ENCODE measurements at regions of chr19 and their contacts with region 1.

Region 1: GRCh38 chr19:12294249-12295158 is at the start of gene ZNF44:
- DNase-seq: peak; percentile 95
- H3K4me3 Mint-ChIP-seq: peak within 1 kb of the TSS; percentile 100
- H3K27ac Mint-ChIP-seq: peak within 1 kb of the TSS; percentile 99
- H3K4me1 Mint-ChIP-seq: peaks cover 34% of the 10 kb centered on the region
- H3K27me3 Mint-ChIP-seq: no peaks in the 10 kb centered on the region
- total RNA-seq, gene ZNF44: 7.4 and 10.3 TPM in 2 replicates

Region 2: GRCh38 chr19:12092065-12092867 is 202.2 kb before region 1 on chr19:
- intact Hi-C with region 1: loop called (anchors 5 kb)
- DNase-seq: peak; percentile 41
- H3K4me3 Mint-ChIP-seq: peak overlapping the region; percentile 81
- H3K27ac Mint-ChIP-seq: peak overlapping the region; percentile 76
- H3K4me1 Mint-ChIP-seq: no peaks in the 10 kb centered on the region
- H3K27me3 Mint-ChIP-seq: no peaks in the 10 kb centered on the region

Region 3: GRCh38 chr19:12139885-12140547 is 154.5 kb before region 1 on chr19 and contains the start of gene ZNF20:
- intact Hi-C with region 1: no loop called
- DNase-seq: peak; percentile 86
- H3K4me3 Mint-ChIP-seq: peak within 1 kb of the TSS; percentile 93
- H3K27ac Mint-ChIP-seq: peak within 1 kb of the TSS; percentile 80
- H3K4me1 Mint-ChIP-seq: peaks cover 34% of the 10 kb centered on the region
- H3K27me3 Mint-ChIP-seq: no peaks in the 10 kb centered on the region
- total RNA-seq, gene ZNF20: 2.8 and 3.5 TPM in 2 replicates

Region 4: GRCh38 chr19:12265921-12266704 is 28.4 kb before region 1 on chr19:
- intact Hi-C with region 1: no loop called
- DNase-seq: no peak
- H3K4me3 Mint-ChIP-seq: no peak overlapping the region
- H3K27ac Mint-ChIP-seq: no peak overlapping the region
- H3K4me1 Mint-ChIP-seq: no peaks in the 10 kb centered on the region
- H3K27me3 Mint-ChIP-seq: no peaks in the 10 kb centered on the region

Region 5: DNA sequence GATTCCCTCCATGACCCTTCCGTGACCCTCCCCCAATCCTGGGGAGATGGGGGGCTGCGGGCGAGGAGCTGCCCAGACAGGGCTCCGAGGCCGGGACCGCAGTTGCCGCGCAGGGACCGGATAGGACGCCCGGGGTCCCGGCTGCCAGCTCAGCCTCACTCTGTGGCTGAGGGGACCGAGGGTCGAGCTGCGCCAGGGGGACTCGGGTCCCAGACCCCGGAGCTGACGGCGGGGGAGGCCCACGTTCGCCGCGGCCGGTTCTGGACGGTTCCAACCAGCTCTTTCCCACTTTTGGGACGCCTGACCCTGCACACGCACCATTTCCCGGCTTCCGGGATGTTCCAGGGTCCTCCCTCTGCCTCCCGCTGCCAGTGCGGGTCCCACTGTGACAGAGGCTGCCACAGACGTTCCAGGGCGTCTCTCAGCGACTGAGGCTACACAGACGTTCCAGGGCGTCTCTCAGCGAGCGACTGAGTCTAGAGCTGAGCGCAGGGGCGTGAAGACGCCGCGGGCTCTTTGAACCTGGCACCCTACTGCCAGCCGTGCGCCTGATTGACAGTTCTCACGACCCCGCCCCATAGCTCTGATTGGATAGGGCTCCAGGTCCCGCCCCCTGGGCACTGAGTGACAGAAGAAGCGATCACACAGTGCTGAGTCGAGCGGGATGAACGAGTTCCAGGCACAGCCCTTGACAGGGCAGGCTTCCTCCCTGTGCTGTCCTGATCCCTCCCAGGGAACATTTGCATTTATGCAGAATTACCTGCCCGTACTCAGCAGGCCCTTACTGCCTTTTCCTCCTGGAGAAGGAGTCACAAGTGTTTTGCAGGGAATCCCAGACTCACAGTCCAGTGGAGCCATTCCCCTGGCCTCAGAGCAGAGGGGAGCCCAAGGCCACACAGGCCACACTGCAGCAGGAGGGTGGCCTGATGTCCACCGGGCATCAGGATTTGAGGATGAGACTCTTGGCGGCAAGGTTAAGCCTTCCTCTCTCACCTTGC is 39.0 kb after region 1 on chr19 and contains the start of gene ZNF563:
- intact Hi-C with region 1: loop called (anchors 1 kb)
- DNase-seq: peak; percentile 96
- H3K4me3 Mint-ChIP-seq: peak within 1 kb of the TSS; percentile 96
- H3K27ac Mint-ChIP-seq: peak within 1 kb of the TSS; percentile 96
- H3K4me1 Mint-ChIP-seq: peaks cover 38% of the 10 kb centered on the region
- H3K27me3 Mint-ChIP-seq: no peaks in the 10 kb centered on the region
- total RNA-seq, gene ZNF563: 1.4 and 2.5 TPM in 2 replicates

Region 6: GRCh38 chr19:12400633-12401502 is 106.4 kb after region 1 on chr19 and contains the start of gene ZNF799:
- intact Hi-C with region 1: loop called (anchors 1 kb)
- DNase-seq: peak; percentile 81
- H3K4me3 Mint-ChIP-seq: peak within 1 kb of the TSS; percentile 93
- H3K27ac Mint-ChIP-seq: peak within 1 kb of the TSS; percentile 68
- H3K4me1 Mint-ChIP-seq: peaks cover 24% of the 10 kb centered on the region
- H3K27me3 Mint-ChIP-seq: no peaks in the 10 kb centered on the region
- total RNA-seq, gene ZNF799: 3.1 TPM in 2 replicates

Region 7: DNA sequence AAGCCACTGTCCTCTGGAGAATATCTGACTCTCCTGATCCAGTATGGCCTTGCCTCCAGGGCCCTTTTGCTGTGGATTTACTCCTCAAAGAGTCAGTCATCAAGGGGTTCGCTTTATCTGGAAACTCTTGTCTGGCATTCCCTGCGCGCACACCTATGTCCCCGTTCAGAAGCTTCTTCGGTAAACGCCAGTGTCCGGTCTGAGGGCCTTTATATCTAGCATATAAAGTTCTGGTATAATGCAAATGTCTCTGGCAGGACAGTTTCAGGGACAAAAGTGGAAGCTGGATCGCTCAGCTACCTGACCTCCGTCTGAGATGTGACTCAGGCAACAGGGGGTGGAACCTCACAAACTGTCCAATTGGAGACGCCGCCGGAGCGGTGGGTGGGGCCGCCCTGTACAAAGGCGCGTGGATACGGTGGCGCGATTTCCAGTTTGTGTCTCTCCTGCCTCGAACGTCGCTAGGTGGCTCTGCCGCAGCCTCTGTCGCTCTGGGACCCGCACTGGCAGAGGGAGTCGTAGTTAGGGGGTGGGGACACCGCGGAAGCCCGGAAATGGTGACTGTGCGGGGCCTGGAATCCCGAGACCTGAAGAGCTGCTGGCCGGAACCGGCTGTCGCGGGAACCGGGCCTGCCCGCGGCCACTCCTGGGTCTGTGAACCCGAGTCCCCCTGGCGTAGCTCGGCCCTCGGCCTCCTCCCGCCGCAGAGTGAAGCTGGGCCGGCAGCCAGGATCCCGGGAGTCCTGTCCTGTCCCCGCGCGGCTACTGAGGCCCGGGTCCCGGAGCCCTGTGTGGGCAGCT is 200.7 kb after region 1 on chr19:
- intact Hi-C with region 1: loop called (anchors 1 kb)
- DNase-seq: peak; percentile 78
- H3K4me3 Mint-ChIP-seq: peak overlapping the region; percentile 83
- H3K27ac Mint-ChIP-seq: peak overlapping the region; percentile 52
- H3K4me1 Mint-ChIP-seq: peaks cover 6% of the 10 kb centered on the region
- H3K27me3 Mint-ChIP-seq: peaks cover 2% of the 10 kb centered on the region